BJ (cell line): ENCODE measurements at regions of chr18 and their contacts with region 1.

Region 1: GRCh38 chr18:3151399-3152264 is 68.1 kb downstream of the MYOM1 start:
- DNase-seq: no peak
- H3K4me3 ChIP-seq: no peak overlapping the region
- H3K27me3 ChIP-seq: no peaks in the 10 kb centered on the region; the same call in 1 of the 2 replicates
- CTCF ChIP-seq: peak; percentile 75

Region 2: GRCh38 chr18:2924920-2925319 is 226.7 kb before region 1 on chr18:
- CTCF ChIA-PET with region 1: interaction called, 10 read pairs
- POLR2A ChIA-PET with region 1: no interaction called
- DNase-seq: no peak
- H3K4me3 ChIP-seq: no peak overlapping the region
- H3K27me3 ChIP-seq: no peaks in the 10 kb centered on the region
- CTCF ChIP-seq: no peak

Region 3: GRCh38 chr18:2932247-2933181 is 219.1 kb before region 1 on chr18:
- CTCF ChIA-PET with region 1: interaction called, 13 read pairs
- POLR2A ChIA-PET with region 1: no interaction called
- DNase-seq: no peak
- H3K4me3 ChIP-seq: no peak overlapping the region
- H3K27me3 ChIP-seq: no peaks in the 10 kb centered on the region
- CTCF ChIP-seq: peak; percentile 62

Region 4: DNA sequence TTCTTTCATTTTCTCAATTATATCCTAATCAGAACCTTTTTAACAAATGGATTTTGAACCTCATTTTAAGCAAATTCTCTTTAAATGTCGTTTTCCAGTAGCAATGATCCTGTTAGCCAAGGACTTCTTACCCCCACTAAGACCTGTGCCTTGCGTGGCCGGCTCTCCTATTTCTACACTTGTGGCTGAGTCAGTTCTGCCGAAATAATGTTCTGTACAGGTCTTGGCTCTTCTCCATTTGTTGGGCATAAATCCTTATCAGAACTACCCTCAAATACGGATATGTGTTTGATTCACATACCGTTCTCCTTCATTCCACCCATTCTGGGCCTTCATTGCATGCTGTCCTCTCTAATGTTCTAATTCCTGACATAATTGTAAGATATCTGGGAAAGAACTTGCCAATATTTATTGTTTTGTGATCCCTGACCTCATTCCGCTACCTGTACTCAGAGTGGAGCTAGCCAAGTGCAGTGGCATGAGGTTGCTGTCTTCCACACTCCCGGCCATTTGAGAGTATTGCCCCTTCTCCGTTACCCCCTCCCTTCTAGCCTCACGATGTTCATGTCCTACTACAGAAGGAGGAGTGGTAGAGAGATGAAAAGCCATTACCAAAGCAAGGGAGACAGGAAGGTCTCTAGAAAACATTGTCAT is 10.5 kb before region 1 on chr18:
- CTCF ChIA-PET with region 1: interaction called, 11 read pairs
- POLR2A ChIA-PET with region 1: no interaction called
- DNase-seq: no peak
- H3K4me3 ChIP-seq: no peak overlapping the region
- H3K27me3 ChIP-seq: no peaks in the 10 kb centered on the region
- CTCF ChIP-seq: no peak

Region 5: GRCh38 chr18:3162181-3162580 is 10.5 kb after region 1 on chr18:
- CTCF ChIA-PET with region 1: interaction called, 13 read pairs
- POLR2A ChIA-PET with region 1: no interaction called
- DNase-seq: no peak
- H3K4me3 ChIP-seq: no peak overlapping the region
- H3K27me3 ChIP-seq: no peaks in the 10 kb centered on the region
- CTCF ChIP-seq: no peak

Region 6: DNA sequence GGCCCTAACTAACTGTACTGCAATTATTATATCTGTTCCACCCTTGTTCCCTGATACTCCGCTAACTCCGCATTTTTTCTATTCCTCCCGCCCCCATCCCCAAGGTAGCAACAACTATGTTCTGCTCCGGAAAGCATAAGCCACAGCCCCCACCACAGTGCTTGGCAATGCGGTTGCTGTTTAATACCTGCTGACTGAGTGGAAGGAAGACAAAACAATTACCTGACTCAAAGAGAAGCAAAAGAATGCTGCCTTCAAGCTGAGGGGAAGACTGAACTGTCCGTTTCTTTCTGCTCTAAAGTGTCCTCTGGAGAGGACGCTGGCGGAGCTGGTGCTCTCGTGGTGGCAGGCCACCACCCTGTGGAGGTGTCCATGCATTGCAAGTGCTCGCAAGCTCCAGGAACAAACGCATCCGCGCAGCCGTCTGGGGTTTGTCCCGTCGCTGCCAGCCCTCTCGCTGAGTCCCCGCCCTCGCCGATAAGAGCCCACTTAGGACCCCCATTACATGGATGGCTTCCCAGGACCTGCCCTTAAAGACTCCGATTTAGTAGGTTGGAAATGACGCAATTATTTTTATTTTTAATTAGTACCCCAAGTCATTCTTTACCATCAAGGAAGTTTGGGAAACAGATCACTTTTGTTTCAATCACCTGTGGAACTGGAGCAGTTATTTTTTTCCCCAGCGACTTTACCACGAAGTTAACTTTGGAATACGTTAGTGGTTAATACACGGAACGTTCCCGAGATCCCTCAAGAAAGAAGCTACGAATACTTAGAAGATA is 94.4 kb after region 1 on chr18:
- CTCF ChIA-PET with region 1: interaction called, 22 read pairs
- POLR2A ChIA-PET with region 1: no interaction called
- DNase-seq: no peak
- H3K4me3 ChIP-seq: peak overlapping the region; percentile 95
- H3K27me3 ChIP-seq: no peaks in the 10 kb centered on the region
- CTCF ChIP-seq: peak; percentile 94